Vagina (tissue), 2 donors: ENCODE measurements at regions of chr2 and their contacts with region 1.

Region 1: GRCh38 chr2:193088026-193088425 is 893.3 kb upstream of the TMEFF2 start:
- DNase-seq: no peak
- H3K4me3 ChIP-seq: no peak overlapping the region
- H3K27ac ChIP-seq: no peak overlapping the region
- H3K4me1 ChIP-seq: no peaks in the 10 kb centered on the region
- H3K27me3 ChIP-seq: no peaks in the 10 kb centered on the region
- CTCF ChIP-seq: no peak
- POLR2A ChIP-seq: no peak

Region 2: GRCh38 chr2:193294371-193294770 is 206.3 kb after region 1 on chr2:
- intact Hi-C with region 1: no loop called
- DNase-seq: no peak
- H3K4me3 ChIP-seq: no peak overlapping the region
- H3K27ac ChIP-seq: no peak overlapping the region
- H3K4me1 ChIP-seq: no peaks in the 10 kb centered on the region
- H3K27me3 ChIP-seq: no peaks in the 10 kb centered on the region
- CTCF ChIP-seq: no peak
- POLR2A ChIP-seq: no peak

Region 3: GRCh38 chr2:193640827-193641226 is 552.8 kb after region 1 on chr2:
- intact Hi-C with region 1: loop called (anchors 5 kb)
- DNase-seq: no peak
- H3K4me3 ChIP-seq: no peak overlapping the region
- H3K27ac ChIP-seq: no peak overlapping the region
- H3K4me1 ChIP-seq: no peaks in the 10 kb centered on the region
- H3K27me3 ChIP-seq: no peaks in the 10 kb centered on the region
- CTCF ChIP-seq: no peak
- POLR2A ChIP-seq: no peak